Right cardiac atrium (tissue), 5 donors: ENCODE measurements at regions of chrX and their contacts with region 1.

Region 1: DNA sequence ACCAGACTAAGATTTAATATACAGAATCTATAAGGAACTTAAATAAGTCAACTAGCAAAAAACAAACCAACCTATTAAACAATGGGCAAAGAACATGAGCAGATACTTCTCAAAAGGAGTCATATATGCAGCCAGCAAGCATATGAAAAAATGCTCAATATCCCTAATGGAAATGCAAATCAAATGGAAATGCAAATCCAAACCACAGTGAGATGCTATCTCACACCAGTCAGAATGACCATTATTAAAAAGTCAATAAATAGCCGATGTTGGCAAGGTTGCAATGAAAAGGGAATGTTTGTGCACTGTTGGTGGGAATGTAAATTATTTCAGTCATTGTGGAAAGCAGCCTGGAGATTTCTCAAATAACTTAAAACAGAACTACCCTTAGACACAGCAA is 97.0 kb upstream of the SLC6A14 start:
- DNase-seq: no peak
- ATAC-seq: no peak
- H3K4me3 ChIP-seq: no peak overlapping the region
- H3K27ac ChIP-seq: no peak overlapping the region
- H3K4me1 ChIP-seq: no peaks in the 10 kb centered on the region
- H3K27me3 ChIP-seq: no peaks in the 10 kb centered on the region

Region 2: GRCh38 chrX:116781926-116782325 is 442.5 kb after region 1 on chrX:
- intact Hi-C with region 1: loop called in 1 of 4 experiments (anchors 10 kb)
- DNase-seq: no peak
- ATAC-seq: no peak
- H3K4me3 ChIP-seq: no peak overlapping the region
- H3K27ac ChIP-seq: no peak overlapping the region
- H3K4me1 ChIP-seq: no peaks in the 10 kb centered on the region
- H3K27me3 ChIP-seq: no peaks in the 10 kb centered on the region